IMR-90 (cell line): ENCODE measurements at regions of chr12 and their contacts with region 1.

Region 1: GRCh38 chr12:57983146-57983857 is 41.9 kb downstream of the ATP23 start:
- DNase-seq: peak; percentile 67
- ATAC-seq: peak; percentile 63
- H3K4me3 ChIP-seq: no peak overlapping the region
- H3K27ac ChIP-seq: no peak overlapping the region
- H3K4me1 ChIP-seq: peaks cover 2% of the 10 kb centered on the region; the same call in 1 of the 2 replicates
- H3K27me3 ChIP-seq: no peaks in the 10 kb centered on the region; the same call in 1 of the 2 replicates
- CTCF ChIP-seq: peak; percentile 83
- POLR2A ChIP-seq: no peak
- RAD21 ChIP-seq: peak; percentile 81

Region 2: DNA sequence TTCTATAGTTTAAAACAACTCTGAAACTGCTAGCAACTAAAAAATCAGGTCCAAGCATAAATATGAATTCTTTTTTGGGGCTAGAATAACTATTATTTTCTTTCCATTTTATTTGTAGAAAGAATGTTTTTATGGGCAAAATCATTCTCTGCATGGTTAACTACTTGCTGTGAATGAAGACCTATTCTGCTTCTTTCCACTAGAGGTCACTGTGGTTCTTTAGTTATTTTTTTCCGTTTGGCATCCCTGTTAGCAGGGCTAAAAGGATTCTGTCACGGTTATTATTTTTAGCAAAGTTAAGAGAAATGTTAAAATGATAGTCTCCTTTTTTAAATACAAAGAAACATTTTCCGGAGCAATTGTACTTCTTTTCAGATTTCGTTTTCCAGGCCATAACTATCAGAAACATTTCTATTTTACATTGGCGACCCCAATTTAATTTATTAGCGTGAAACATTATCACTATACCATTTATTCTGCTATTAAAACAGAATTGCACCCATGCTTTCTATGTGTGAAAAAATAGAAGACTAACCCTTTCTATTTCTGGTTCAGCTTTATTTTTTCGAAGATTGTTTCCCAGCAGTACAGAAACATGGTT is 362.8 kb after region 1 on chr12:
- CTCF ChIA-PET with region 1: no interaction called
- POLR2A ChIA-PET with region 1: no interaction called
- dilution Hi-C with region 1: no loop called
- in situ Hi-C with region 1: loop called (anchors 10 kb)
- intact Hi-C with region 1: loop called (anchors 2 kb)
- DNase-seq: peak; percentile 62
- ATAC-seq: peak; percentile 77
- H3K4me3 ChIP-seq: no peak overlapping the region
- H3K27ac ChIP-seq: no peak overlapping the region
- H3K4me1 ChIP-seq: peaks cover 10% of the 10 kb centered on the region
- H3K27me3 ChIP-seq: no peaks in the 10 kb centered on the region
- CTCF ChIP-seq: peak; percentile 86
- POLR2A ChIP-seq: no peak
- RAD21 ChIP-seq: peak; percentile 92

Region 3: DNA sequence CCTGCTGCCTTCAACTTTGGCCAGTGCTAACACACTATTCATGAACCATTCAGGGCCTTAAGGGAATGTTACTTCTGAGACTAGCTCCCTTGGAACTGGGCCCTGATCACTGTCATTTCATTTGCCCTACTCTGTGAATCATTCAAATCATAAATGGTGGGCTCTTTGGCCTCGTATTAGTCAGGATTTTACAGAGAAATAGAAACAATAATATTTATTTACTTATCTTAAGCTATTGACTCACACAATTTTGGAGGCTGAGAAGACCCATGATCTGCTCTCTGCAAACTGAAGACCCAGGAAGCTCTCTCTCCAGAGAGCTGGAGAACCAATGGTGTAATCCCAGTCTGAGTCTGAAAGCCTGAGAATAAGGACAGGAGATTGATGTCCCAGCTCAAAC is 538.5 kb after region 1 on chr12:
- CTCF ChIA-PET with region 1: no interaction called
- POLR2A ChIA-PET with region 1: no interaction called
- dilution Hi-C with region 1: no loop called
- in situ Hi-C with region 1: no loop called
- intact Hi-C with region 1: no loop called
- DNase-seq: no peak
- ATAC-seq: no peak
- H3K4me3 ChIP-seq: no peak overlapping the region
- H3K27ac ChIP-seq: no peak overlapping the region
- H3K4me1 ChIP-seq: no peaks in the 10 kb centered on the region
- H3K27me3 ChIP-seq: no peaks in the 10 kb centered on the region
- CTCF ChIP-seq: no peak
- POLR2A ChIP-seq: no peak
- RAD21 ChIP-seq: no peak

Region 4: DNA sequence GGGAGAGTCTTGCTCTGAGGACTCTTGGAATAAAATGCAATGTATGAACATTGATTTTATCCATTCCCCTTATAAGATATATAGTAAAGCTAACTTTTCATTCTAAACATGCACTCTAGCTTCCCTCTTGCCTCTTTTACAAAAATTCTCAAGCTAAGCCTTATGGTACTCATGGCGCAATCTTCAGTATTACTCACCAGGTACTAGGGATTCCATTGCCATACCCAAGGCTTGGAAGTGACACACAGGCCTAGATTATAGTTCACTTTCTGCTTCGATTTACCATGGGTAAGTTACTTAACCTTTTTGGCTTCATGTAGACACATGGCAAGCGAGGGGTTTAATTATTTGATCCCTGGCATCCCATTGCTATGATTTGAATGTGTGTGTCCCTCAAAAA is 605.5 kb after region 1 on chr12:
- CTCF ChIA-PET with region 1: no interaction called
- POLR2A ChIA-PET with region 1: no interaction called
- dilution Hi-C with region 1: no loop called
- in situ Hi-C with region 1: no loop called
- intact Hi-C with region 1: no loop called
- DNase-seq: peak; percentile 81
- ATAC-seq: peak; percentile 75
- H3K4me3 ChIP-seq: no peak overlapping the region
- H3K27ac ChIP-seq: no peak overlapping the region
- H3K4me1 ChIP-seq: peaks cover 4% of the 10 kb centered on the region
- H3K27me3 ChIP-seq: no peaks in the 10 kb centered on the region
- CTCF ChIP-seq: no peak
- POLR2A ChIP-seq: no peak
- RAD21 ChIP-seq: no peak

Region 5: GRCh38 chr12:58877242-58877743 is 894.0 kb after region 1 on chr12:
- CTCF ChIA-PET with region 1: no interaction called
- POLR2A ChIA-PET with region 1: no interaction called
- dilution Hi-C with region 1: no loop called
- in situ Hi-C with region 1: loop called (anchors 25 kb)
- intact Hi-C with region 1: loop called (anchors 5 kb)
- DNase-seq: peak; percentile 100
- ATAC-seq: peak; percentile 90
- H3K4me3 ChIP-seq: no peak overlapping the region
- H3K27ac ChIP-seq: peak overlapping the region; percentile 0; the same call in 1 of the 2 replicates
- H3K4me1 ChIP-seq: peaks cover 3% of the 10 kb centered on the region; the same call in 1 of the 2 replicates
- H3K27me3 ChIP-seq: no peaks in the 10 kb centered on the region
- CTCF ChIP-seq: no peak
- POLR2A ChIP-seq: no peak
- RAD21 ChIP-seq: no peak

Region 6: GRCh38 chr12:58920102-58920960 is 937.0 kb after region 1 on chr12 and contains the start of gene LRIG3:
- CTCF ChIA-PET with region 1: interaction called, 7 read pairs
- POLR2A ChIA-PET with region 1: no interaction called
- dilution Hi-C with region 1: no loop called
- in situ Hi-C with region 1: no loop called
- intact Hi-C with region 1: loop called (anchors 5 kb)
- DNase-seq: peak; percentile 89
- ATAC-seq: peak; percentile 82
- H3K4me3 ChIP-seq: peak within 1 kb of the TSS; percentile 80
- H3K27ac ChIP-seq: peak within 1 kb of the TSS; percentile 98
- H3K4me1 ChIP-seq: no peaks in the 10 kb centered on the region; the same call in none of the 2 replicates
- H3K27me3 ChIP-seq: no peaks in the 10 kb centered on the region
- CTCF ChIP-seq: 0 out of 2 replicates have a peak, but pooled peaks have one; percentile 1
- POLR2A ChIP-seq: no peak
- RAD21 ChIP-seq: no peak
- total RNA-seq, gene LRIG3: 63.9 and 71.2 TPM in 2 replicates

Region 7: GRCh38 chr12:59093073-59093772 is 1109.9 kb after region 1 on chr12:
- CTCF ChIA-PET with region 1: no interaction called
- POLR2A ChIA-PET with region 1: no interaction called
- dilution Hi-C with region 1: no loop called
- in situ Hi-C with region 1: loop called (anchors 5 kb)
- intact Hi-C with region 1: no loop called
- DNase-seq: peak; percentile 80
- ATAC-seq: peak; percentile 86
- H3K4me3 ChIP-seq: no peak overlapping the region
- H3K27ac ChIP-seq: peak overlapping the region; percentile 41; the same call in 1 of the 2 replicates
- H3K4me1 ChIP-seq: peaks cover 6% of the 10 kb centered on the region
- H3K27me3 ChIP-seq: no peaks in the 10 kb centered on the region
- CTCF ChIP-seq: no peak
- POLR2A ChIP-seq: no peak
- RAD21 ChIP-seq: no peak

Region 8: GRCh38 chr12:59372956-59373355 is 1389.7 kb after region 1 on chr12:
- CTCF ChIA-PET with region 1: no interaction called
- POLR2A ChIA-PET with region 1: no interaction called
- dilution Hi-C with region 1: no loop called
- in situ Hi-C with region 1: no loop called
- intact Hi-C with region 1: loop called (anchors 10 kb)
- DNase-seq: peak; percentile 21
- ATAC-seq: peak; percentile 95
- H3K4me3 ChIP-seq: no peak overlapping the region
- H3K27ac ChIP-seq: no peak overlapping the region
- H3K4me1 ChIP-seq: no peaks in the 10 kb centered on the region
- H3K27me3 ChIP-seq: no peaks in the 10 kb centered on the region
- CTCF ChIP-seq: peak; percentile 46
- POLR2A ChIP-seq: no peak
- RAD21 ChIP-seq: peak; percentile 44